ENCODE measurements at regions of chr19 and their contacts with region 1.

Region 1: GRCh38 chr19:19145684-19146608 is 7.7 kb upstream of the TMEM161A start:
- DNase-seq: peak; percentile 65 to 97 (median 84)

Region 2: GRCh38 chr19:19170053-19170872 is 24.3 kb after region 1 on chr19 and contains the start of gene MEF2B:
- intact Hi-C with region 1: loop called (anchors 1 kb)
- DNase-seq: peak; percentile 34 to 94 (median 66)

Region 3: DNA sequence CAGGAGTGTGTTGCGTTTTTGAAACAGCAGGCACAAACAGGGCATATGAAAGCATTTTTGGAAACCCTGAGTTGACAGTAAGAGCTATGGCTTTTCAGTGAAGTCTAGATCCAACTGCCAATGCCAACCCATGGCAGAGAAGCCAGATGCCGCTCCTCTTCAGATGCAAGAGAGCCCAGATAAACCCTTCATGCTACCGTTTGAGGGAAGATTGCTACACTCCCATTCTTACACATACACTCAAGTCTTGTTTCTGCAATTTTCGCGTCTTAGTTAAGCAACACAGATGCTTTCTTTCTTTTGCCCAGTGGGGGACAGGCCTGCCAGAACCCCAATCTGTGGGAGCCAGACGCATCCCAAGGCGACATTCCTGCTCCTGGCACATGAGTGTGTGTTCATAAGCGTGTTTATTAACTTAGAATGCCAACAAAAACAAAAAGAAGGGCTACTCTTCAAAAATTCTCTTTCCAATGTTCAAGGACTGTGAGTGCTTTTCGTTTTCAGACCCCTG is 35.6 kb after region 1 on chr19:
- intact Hi-C with region 1: no loop called
- DNase-seq: no peak

Measured in posterior cingulate gyrus (tissue), 11 donors.